Endothelial cell of umbilical vein (primary cell): ENCODE measurements at regions of chr9 and their contacts with region 1.

Region 1: GRCh38 chr9:130137641-130138081 is 34.5 kb upstream of the NCS1 start:
- DNase-seq: no peak
- H3K4me3 ChIP-seq: no peak overlapping the region
- H3K27ac ChIP-seq: peak overlapping the region; percentile 47
- H3K4me1 ChIP-seq: peaks cover 18% of the 10 kb centered on the region
- H3K27me3 ChIP-seq: no peaks in the 10 kb centered on the region
- CTCF ChIP-seq: no peak
- POLR2A ChIP-seq: no peak

Region 2: GRCh38 chr9:130120832-130121231 is 16.8 kb before region 1 on chr9:
- CTCF ChIA-PET with region 1: interaction called, 3 read pairs
- POLR2A ChIA-PET with region 1: interaction called, 4 read pairs
- dilution Hi-C with region 1: no loop called
- intact Hi-C with region 1: loop called (anchors 1 kb)
- DNase-seq: no peak
- H3K4me3 ChIP-seq: no peak overlapping the region
- H3K27ac ChIP-seq: no peak overlapping the region
- H3K4me1 ChIP-seq: peaks cover 9% of the 10 kb centered on the region
- H3K27me3 ChIP-seq: no peaks in the 10 kb centered on the region
- CTCF ChIP-seq: no peak
- POLR2A ChIP-seq: no peak

Region 3: DNA sequence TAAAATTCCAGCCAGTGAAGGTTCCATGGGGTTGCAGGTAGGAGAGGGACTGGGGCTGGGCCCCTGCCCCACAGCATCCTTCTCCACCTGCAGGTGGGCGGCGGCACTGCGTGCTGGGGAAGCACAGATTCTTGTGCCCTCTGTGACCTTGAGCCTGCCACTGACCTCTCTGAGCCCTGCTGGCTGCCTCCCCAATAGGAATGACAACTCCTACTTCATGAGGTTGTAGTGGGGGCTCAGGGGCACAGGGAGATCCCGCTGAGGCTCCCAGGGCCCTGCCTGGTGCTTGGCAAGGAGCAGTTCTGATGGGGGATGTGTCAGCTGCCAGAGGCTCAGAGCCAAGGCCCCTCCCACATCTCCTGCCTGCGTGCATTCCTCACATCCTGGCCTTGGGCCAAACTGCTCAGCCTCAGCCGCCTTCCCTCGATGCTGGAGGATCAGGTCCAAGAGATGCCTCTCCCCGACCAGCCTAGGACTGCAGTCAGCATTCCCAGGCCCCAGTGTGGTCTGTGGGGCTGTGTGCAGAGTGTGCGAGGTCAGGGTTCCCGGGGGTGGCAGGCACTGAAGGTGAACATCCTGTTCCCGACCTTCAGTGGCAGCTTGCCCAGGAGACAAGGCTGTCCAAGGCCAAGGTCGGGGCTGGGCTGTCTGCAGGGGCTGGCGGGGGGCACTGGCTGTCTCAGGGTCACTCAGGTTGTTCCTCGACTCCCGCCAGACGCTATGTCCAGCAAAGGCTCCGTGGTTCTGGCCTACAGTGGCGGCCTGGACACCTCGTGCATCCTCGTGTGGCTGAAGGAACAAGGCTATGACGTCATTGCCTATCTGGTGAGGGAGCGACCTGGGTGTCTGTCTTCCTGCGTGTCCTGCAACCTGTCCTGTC is 314.1 kb after region 1 on chr9:
- CTCF ChIA-PET with region 1: no interaction called
- POLR2A ChIA-PET with region 1: no interaction called
- dilution Hi-C with region 1: no loop called
- intact Hi-C with region 1: no loop called
- DNase-seq: peak; percentile 93
- H3K4me3 ChIP-seq: no peak overlapping the region
- H3K27ac ChIP-seq: no peak overlapping the region
- H3K4me1 ChIP-seq: peaks cover 30% of the 10 kb centered on the region
- H3K27me3 ChIP-seq: peaks cover 0 to 2% of the 10 kb centered on the region in 2 experiments
- CTCF ChIP-seq: peak; percentile 58 to 74
- POLR2A ChIP-seq: no peak